ENCODE measurements at regions of chr10 and their contacts with region 1.

Region 1: GRCh38 chr10:14500172-14500765 is 169.5 kb upstream of the FRMD4A start:
- DNase-seq: no peak
- H3K4me3 ChIP-seq: no peak overlapping the region
- H3K27ac ChIP-seq: no peak overlapping the region
- H3K4me1 ChIP-seq: peaks cover 5 to 17% (median 8%) of the 10 kb centered on the region in 6 donors
- H3K27me3 ChIP-seq: no peaks in the 10 kb centered on the region
- CTCF ChIP-seq: no peak
- POLR2A ChIP-seq: no peak

Region 2: GRCh38 chr10:14815681-14816080 is 315.4 kb after region 1 on chr10:
- intact Hi-C with region 1: loop called (anchors 5 kb)
- DNase-seq: no peak
- H3K4me3 ChIP-seq: no peak overlapping the region
- H3K27ac ChIP-seq: no peak overlapping the region
- H3K4me1 ChIP-seq: peaks cover 0 to 9% (median 0%) of the 10 kb centered on the region in 6 donors
- H3K27me3 ChIP-seq: no peaks in the 10 kb centered on the region
- CTCF ChIP-seq: no peak
- POLR2A ChIP-seq: no peak

Measured in spleen (tissue), 13 donors.